Endothelial cell of umbilical vein (primary cell): ENCODE measurements at regions of chr22 and their contacts with region 1.

Region 1: DNA sequence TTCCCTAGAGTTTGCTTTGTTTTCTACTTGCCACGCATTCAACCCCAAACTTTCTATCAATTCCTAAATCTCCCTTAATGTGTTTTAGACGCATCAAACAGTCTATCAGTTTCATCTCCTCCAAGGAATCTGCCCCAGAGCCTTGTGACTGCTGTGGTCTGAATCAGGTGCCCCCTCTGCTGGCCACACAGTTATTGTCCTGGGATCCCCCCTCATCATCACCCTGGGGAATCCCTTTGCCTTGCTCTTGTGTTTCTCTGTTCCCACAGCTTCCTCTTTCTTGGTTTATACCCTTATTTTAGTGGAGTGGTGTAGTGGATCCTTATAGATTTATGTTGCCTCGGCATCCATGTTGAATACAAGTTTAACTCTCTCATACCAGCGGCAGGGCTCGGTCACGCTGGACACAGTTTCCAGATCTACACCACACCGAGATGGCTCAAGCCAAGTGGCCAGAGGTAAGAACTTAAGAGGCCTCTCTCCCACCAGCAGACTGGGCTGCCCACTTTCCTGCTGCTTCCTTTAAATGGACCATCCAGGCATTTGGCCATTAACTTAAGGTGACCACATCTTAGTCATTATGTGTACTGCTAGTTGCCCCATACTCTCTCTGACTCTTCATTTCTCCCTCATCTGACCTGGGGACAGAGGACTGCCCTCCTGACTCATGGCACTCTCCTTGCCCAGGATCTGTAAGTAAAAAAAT is 8.2 kb downstream of the UPB1 start:
- DNase-seq: peak; percentile 76
- H3K4me3 ChIP-seq: no peak overlapping the region
- H3K27ac ChIP-seq: no peak overlapping the region
- H3K4me1 ChIP-seq: peaks cover 16% of the 10 kb centered on the region
- H3K27me3 ChIP-seq: no peaks in the 10 kb centered on the region
- CTCF ChIP-seq: peak; percentile 75 to 77
- POLR2A ChIP-seq: no peak

Region 2: GRCh38 chr22:24325105-24325757 is 178.1 kb before region 1 on chr22:
- CTCF ChIA-PET with region 1: interaction called, 6 read pairs
- POLR2A ChIA-PET with region 1: no interaction called
- dilution Hi-C with region 1: no loop called
- intact Hi-C with region 1: loop called (anchors 1 kb)
- DNase-seq: peak; percentile 87
- H3K4me3 ChIP-seq: no peak overlapping the region
- H3K27ac ChIP-seq: no peak overlapping the region
- H3K4me1 ChIP-seq: peaks cover 27% of the 10 kb centered on the region
- H3K27me3 ChIP-seq: no peaks in the 10 kb centered on the region
- CTCF ChIP-seq: peak; percentile 64
- POLR2A ChIP-seq: no peak

Region 3: DNA sequence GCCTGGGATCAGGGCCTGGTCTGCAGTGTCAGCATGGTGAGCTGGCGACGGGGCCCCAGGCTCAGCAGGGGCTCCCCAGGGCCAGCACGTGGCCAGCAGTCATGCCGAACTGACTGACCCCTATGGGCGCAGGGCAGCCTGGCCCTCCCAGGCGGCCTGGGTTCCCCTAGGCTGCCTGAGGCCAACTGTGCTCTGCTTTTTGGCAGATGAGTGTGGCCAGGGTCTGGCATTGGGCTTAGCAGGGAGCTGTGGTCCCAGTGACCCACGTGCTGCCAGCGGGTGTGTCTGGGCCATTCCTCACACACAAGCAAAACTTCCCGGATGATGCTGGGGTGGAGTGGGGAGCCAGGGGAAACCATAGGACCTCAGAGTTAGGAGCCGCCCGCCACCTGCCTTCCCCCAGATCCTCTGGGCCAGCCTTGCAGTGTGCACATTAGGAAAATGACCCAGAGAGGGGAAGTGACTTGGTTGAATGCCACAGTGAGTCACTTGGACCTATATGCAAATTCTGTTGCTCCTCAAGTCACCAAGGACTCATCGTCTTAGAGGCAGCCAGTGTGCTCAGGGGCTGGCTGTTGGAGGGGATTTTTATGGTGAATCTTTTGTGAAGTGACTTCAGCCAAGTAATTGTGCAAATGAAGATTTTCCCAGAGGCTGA is 69.3 kb before region 1 on chr22:
- CTCF ChIA-PET with region 1: interaction called, 14 read pairs
- POLR2A ChIA-PET with region 1: no interaction called
- dilution Hi-C with region 1: no loop called
- intact Hi-C with region 1: no loop called
- DNase-seq: peak; percentile 40
- H3K4me3 ChIP-seq: no peak overlapping the region
- H3K27ac ChIP-seq: peak overlapping the region; percentile 43
- H3K4me1 ChIP-seq: peaks cover 18% of the 10 kb centered on the region
- H3K27me3 ChIP-seq: no peaks in the 10 kb centered on the region
- CTCF ChIP-seq: no peak
- POLR2A ChIP-seq: no peak

Region 4: DNA sequence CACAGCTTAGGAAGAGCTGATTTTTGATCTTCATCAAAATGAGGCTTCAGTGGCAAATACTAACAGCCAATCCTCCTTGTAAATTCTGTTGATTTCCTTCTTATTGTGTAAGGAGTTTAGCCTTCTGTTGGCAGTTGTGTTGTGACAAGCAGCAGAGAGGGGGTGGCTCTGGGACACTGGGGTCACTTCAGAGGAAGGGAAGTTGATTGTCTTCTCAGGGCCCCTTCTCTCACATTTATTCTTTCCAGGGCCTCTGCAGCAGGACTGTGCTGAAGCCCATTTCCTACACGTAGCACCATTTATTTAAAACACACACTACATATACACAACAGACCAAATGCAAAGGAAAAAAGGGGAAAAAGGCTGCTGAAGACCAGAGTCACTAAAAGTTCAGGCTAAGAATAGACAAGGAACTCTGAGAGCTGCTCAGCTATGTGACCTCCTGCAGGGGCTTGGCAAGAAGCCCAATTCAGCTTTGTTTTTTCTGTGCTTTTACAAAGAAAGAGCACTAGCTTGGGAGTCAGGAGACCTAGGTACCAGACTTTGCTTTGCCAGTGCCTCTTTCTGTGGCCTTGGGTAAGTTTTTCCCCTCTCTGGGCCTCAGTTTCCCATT is 36.5 kb before region 1 on chr22:
- CTCF ChIA-PET with region 1: interaction called, 12 read pairs
- POLR2A ChIA-PET with region 1: no interaction called
- dilution Hi-C with region 1: no loop called
- intact Hi-C with region 1: no loop called
- DNase-seq: peak; percentile 94
- H3K4me3 ChIP-seq: no peak overlapping the region
- H3K27ac ChIP-seq: peak overlapping the region; percentile 76
- H3K4me1 ChIP-seq: peaks cover 29% of the 10 kb centered on the region
- H3K27me3 ChIP-seq: no peaks in the 10 kb centered on the region
- CTCF ChIP-seq: no peak
- POLR2A ChIP-seq: no peak

Region 5: GRCh38 chr22:24525416-24526037 is 22.2 kb after region 1 on chr22:
- CTCF ChIA-PET with region 1: interaction called, 4 read pairs
- POLR2A ChIA-PET with region 1: no interaction called
- dilution Hi-C with region 1: no loop called
- intact Hi-C with region 1: loop called (anchors 1 kb)
- DNase-seq: peak; percentile 72
- H3K4me3 ChIP-seq: no peak overlapping the region
- H3K27ac ChIP-seq: no peak overlapping the region
- H3K4me1 ChIP-seq: peaks cover 9% of the 10 kb centered on the region
- H3K27me3 ChIP-seq: no peaks in the 10 kb centered on the region
- CTCF ChIP-seq: peak; percentile 84 to 89
- POLR2A ChIP-seq: no peak